Natural killer cell (primary cell): ENCODE measurements at regions of chr20 and their contacts with region 1.

Region 1: GRCh38 chr20:50009521-50010378 is 27.0 kb downstream of the SNAI1 start:
- DNase-seq: no peak
- ATAC-seq: no peak
- H3K4me3 ChIP-seq: no peak overlapping the region
- H3K4me3 Mint-ChIP-seq: no peak overlapping the region
- H3K27ac ChIP-seq: no peak overlapping the region
- H3K27ac Mint-ChIP-seq: no peak overlapping the region
- H3K4me1 ChIP-seq: peaks cover 34% of the 10 kb centered on the region
- H3K4me1 Mint-ChIP-seq: peaks cover 8 to 32% of the 10 kb centered on the region in 2 donors
- H3K27me3 ChIP-seq: peaks cover 3% of the 10 kb centered on the region
- H3K27me3 Mint-ChIP-seq: peaks cover 0 to 8% of the 10 kb centered on the region in 2 donors
- CTCF ChIP-seq: no peak

Region 2: GRCh38 chr20:49951151-49951550 is 58.6 kb before region 1 on chr20:
- intact Hi-C with region 1: no loop called
- DNase-seq: no peak
- ATAC-seq: no peak
- H3K4me3 ChIP-seq: no peak overlapping the region
- H3K4me3 Mint-ChIP-seq: no peak overlapping the region
- H3K27ac ChIP-seq: no peak overlapping the region
- H3K27ac Mint-ChIP-seq: peak overlapping the region in 1 of 2 donors; percentile 32
- H3K4me1 ChIP-seq: no peaks in the 10 kb centered on the region
- H3K4me1 Mint-ChIP-seq: peaks cover 0 to 5% of the 10 kb centered on the region in 2 donors
- H3K27me3 ChIP-seq: no peaks in the 10 kb centered on the region
- H3K27me3 Mint-ChIP-seq: no peaks in the 10 kb centered on the region
- CTCF ChIP-seq: no peak

Region 3: DNA sequence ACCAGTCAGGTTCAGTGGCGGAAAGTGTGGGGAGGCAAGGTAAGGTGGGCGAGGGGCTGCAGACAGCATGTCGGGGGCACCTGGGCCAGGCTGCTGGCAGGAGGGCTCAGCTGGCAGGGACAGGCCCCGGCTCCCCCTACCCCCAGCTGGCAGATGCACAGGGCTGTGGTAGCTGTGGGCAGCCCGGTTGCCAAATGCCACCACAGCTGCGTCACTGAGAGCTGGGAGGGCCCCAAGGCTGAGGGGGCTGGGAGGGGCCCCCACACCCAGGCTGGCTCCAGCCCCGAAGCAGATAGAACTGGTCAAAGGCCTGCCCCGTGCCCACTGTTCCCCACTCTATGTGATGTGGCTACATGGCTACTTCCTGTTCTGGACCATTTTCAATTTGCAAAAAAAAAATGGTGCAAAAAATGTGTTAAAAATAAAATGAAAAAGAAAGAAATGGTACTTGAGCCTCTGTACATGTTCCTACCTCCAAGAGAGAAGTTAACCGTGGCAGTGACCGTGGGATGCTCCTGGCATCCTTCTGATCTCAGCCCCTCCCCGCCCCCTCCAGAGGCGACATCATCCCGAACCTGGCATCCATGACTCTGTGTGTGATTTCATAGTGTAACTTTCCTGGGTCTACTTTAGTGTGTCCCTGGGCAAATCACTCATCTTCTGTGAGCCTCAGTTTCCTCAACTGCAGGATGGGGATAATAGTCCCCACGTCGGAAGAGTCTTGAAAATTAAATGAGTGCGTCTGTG is 38.8 kb after region 1 on chr20:
- intact Hi-C with region 1: loop called (anchors 5 kb)
- DNase-seq: peak; percentile 61 to 76
- ATAC-seq: peak; percentile 85 to 91 (median 90)
- H3K4me3 ChIP-seq: no peak overlapping the region
- H3K4me3 Mint-ChIP-seq: peak overlapping the region; percentile 73
- H3K27ac ChIP-seq: peak overlapping the region; percentile 35
- H3K27ac Mint-ChIP-seq: peak overlapping the region; percentile 77 to 78
- H3K4me1 ChIP-seq: peaks cover 37% of the 10 kb centered on the region
- H3K4me1 Mint-ChIP-seq: peaks cover 30 to 34% of the 10 kb centered on the region in 2 donors
- H3K27me3 ChIP-seq: no peaks in the 10 kb centered on the region
- H3K27me3 Mint-ChIP-seq: no peaks in the 10 kb centered on the region
- CTCF ChIP-seq: no peak